Mammary epithelial cell (primary cell): ENCODE measurements at regions of chr15 and their contacts with region 1.

Region 1: GRCh38 chr15:80679167-80680131 is 15.7 kb upstream of the ABHD17C start:
- DNase-seq: peak; percentile 85
- H3K4me3 ChIP-seq: no peak overlapping the region
- H3K27ac ChIP-seq: peak overlapping the region; percentile 63
- H3K4me1 ChIP-seq: peaks cover 15% of the 10 kb centered on the region
- H3K27me3 ChIP-seq: no peaks in the 10 kb centered on the region
- CTCF ChIP-seq: no peak

Region 2: DNA sequence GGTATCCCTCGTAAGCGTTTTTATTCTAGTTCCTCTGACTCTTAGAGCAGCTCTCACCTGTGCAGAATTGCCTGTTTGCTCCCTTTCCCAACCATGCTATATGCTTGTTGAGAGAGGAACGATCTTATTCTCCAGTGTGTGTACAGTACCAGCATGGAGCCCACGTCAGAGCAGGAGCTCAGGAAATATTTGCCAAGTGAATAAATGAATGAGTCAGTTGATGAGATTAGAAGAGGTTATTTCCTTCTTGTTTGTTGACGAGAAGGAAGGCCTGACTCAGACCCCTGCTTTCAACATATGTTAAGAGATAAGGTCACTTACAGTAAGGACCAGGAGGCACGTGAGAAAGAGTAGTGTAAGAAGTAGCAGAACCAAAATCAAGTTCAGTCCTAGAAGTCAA is 90.6 kb before region 1 on chr15:
- CTCF ChIA-PET with region 1: no interaction called
- dilution Hi-C with region 1: no loop called
- in situ Hi-C with region 1: no loop called
- intact Hi-C with region 1: loop called (anchors 5 kb)
- DNase-seq: peak; percentile 95
- H3K4me3 ChIP-seq: no peak overlapping the region
- H3K27ac ChIP-seq: peak overlapping the region; percentile 43
- H3K4me1 ChIP-seq: peaks cover 43% of the 10 kb centered on the region
- H3K27me3 ChIP-seq: no peaks in the 10 kb centered on the region
- CTCF ChIP-seq: no peak